Caco-2 (cell line): ENCODE measurements at regions of chr2 and their contacts with region 1.

Region 1: GRCh38 chr2:39227628-39228412 is 15.9 kb downstream of the CDKL4 start:
- DNase-seq: peak; percentile 76 to 83
- H3K4me3 ChIP-seq: no peak overlapping the region
- H3K4me3 Mint-ChIP-seq: peak overlapping the region; percentile 5
- H3K27ac Mint-ChIP-seq: no peak overlapping the region
- H3K4me1 ChIP-seq: peaks cover 10% of the 10 kb centered on the region
- H3K4me1 Mint-ChIP-seq: peaks cover 17% of the 10 kb centered on the region
- H3K27me3 ChIP-seq: no peaks in the 10 kb centered on the region
- H3K27me3 Mint-ChIP-seq: no peaks in the 10 kb centered on the region
- CTCF ChIP-seq: peak; percentile 84 to 94

Region 2: DNA sequence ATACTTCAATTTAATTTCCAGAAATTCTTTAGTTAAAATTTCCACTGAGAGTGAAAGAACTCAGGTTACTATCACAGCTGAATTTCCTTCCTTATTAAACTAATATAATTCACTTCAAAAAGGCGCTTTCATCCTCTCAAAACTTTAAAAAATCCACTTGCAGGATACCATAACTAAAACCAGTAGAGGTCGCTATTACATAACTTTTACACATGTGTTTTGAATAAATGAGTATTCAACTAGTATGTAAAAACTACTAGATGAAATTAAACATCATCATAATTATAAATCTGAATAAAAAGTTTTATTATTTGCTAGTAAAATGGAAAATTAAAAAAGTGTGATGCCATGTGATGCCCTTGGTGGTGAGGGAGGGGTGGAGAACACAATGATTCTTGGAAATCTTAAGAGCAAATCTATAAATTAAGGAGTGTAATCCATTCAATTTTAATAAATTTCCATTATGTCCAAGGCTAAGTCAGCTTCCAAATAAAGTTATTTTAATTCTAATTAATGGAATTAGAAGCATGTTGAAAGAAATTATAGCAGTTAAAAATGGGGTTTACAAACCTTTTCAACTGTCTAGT is 168.4 kb before region 1 on chr2:
- CTCF ChIA-PET with region 1: interaction called, 11 read pairs
- POLR2A ChIA-PET with region 1: no interaction called
- intact Hi-C with region 1: loop called (anchors 1 kb)
- DNase-seq: peak in 1 of 2 experiments; percentile 36
- H3K4me3 ChIP-seq: no peak overlapping the region
- H3K4me3 Mint-ChIP-seq: no peak overlapping the region
- H3K27ac Mint-ChIP-seq: no peak overlapping the region
- H3K4me1 ChIP-seq: no peaks in the 10 kb centered on the region
- H3K4me1 Mint-ChIP-seq: peaks cover 6% of the 10 kb centered on the region
- H3K27me3 ChIP-seq: no peaks in the 10 kb centered on the region
- H3K27me3 Mint-ChIP-seq: no peaks in the 10 kb centered on the region
- CTCF ChIP-seq: peak; percentile 52 to 53